Esophagus muscularis mucosa (tissue), 4 donors: ENCODE measurements at regions of chr2 and their contacts with region 1.

Region 1: GRCh38 chr2:120735746-120736170 is at the start of gene GLI2:
- DNase-seq: peak; percentile 93
- H3K4me3 ChIP-seq: peak within 1 kb of the TSS; percentile 70 to 81 (median 74)
- H3K27ac ChIP-seq: peak within 1 kb of the TSS; percentile 87 to 94 (median 92)
- H3K4me1 ChIP-seq: peaks cover 12 to 82% (median 74%) of the 10 kb centered on the region in 4 donors
- H3K27me3 ChIP-seq: peaks cover 0 to 32% (median 0%) of the 10 kb centered on the region in 4 donors
- CTCF ChIP-seq: peak; percentile 63 to 81 (median 76)
- EP300 ChIP-seq: no peak
- POLR2A ChIP-seq: no peak
- total RNA-seq, gene GLI2: 7.1 to 25.3 (median 11.8) TPM

Region 2: GRCh38 chr2:120820263-120820952 is 84.7 kb after region 1 on chr2:
- intact Hi-C with region 1: loop called (anchors 5 kb)
- DNase-seq: no peak
- H3K4me3 ChIP-seq: peak overlapping the region in 3 of 4 donors; percentile 3 to 41 (median 5)
- H3K27ac ChIP-seq: peak overlapping the region in 2 of 4 donors; percentile 27 to 50
- H3K4me1 ChIP-seq: peaks cover 6 to 52% (median 41%) of the 10 kb centered on the region in 4 donors
- H3K27me3 ChIP-seq: no peaks in the 10 kb centered on the region
- CTCF ChIP-seq: no peak
- EP300 ChIP-seq: no peak
- POLR2A ChIP-seq: no peak

Region 3: DNA sequence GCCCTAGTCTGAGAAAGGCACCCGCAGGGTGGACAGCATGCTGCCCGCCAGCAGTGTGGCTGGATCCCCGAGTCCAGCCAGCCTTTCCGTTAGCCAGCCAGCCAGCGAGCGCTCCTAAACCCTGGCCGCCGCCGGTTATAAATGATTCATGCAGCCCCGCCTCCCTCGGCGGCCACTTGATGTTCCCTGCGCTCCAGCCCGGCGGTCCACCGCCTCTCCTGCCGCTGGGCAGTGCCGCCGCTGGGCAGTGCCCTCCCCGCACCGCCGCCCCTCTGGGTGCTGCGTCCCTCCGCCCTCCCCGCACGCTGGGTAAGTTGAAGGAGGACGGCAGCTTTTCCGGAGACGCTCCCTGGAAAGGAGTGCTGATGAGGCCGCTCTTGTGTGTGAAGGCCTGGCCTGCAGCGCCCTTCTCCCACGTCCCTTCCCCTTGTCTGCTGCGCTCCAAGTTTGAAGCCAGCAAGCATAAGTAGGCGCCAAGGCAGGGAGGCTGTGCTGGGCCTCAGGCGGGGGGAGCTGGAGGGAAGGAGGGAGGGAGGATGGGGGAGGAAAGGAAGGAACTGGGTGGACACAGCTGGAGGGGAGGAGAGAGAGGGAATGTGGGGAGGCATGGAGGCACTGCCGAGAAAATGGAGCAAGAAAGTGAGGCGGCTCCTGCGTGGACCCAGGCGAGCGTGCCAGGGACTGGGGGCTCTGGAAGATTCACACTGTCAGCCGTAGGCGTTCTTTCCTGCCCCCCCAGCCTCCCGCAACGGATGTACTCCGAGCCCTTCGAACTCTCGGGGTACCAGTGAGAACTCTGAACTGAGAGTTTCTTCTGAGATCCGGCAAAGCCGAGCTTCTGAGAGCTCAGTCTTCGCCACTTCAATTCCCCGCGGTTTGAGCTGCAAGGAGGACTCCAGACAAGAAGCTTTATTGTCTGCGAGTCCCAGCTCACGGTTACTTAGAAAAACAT is 131.8 kb after region 1 on chr2:
- intact Hi-C with region 1: loop called (anchors 5 kb)
- DNase-seq: no peak
- H3K4me3 ChIP-seq: peak overlapping the region; percentile 52 to 65 (median 56)
- H3K27ac ChIP-seq: peak overlapping the region; percentile 83 to 93 (median 89)
- H3K4me1 ChIP-seq: peaks cover 12 to 71% (median 64%) of the 10 kb centered on the region in 4 donors
- H3K27me3 ChIP-seq: no peaks in the 10 kb centered on the region
- CTCF ChIP-seq: no peak
- EP300 ChIP-seq: no peak
- POLR2A ChIP-seq: no peak

Region 4: DNA sequence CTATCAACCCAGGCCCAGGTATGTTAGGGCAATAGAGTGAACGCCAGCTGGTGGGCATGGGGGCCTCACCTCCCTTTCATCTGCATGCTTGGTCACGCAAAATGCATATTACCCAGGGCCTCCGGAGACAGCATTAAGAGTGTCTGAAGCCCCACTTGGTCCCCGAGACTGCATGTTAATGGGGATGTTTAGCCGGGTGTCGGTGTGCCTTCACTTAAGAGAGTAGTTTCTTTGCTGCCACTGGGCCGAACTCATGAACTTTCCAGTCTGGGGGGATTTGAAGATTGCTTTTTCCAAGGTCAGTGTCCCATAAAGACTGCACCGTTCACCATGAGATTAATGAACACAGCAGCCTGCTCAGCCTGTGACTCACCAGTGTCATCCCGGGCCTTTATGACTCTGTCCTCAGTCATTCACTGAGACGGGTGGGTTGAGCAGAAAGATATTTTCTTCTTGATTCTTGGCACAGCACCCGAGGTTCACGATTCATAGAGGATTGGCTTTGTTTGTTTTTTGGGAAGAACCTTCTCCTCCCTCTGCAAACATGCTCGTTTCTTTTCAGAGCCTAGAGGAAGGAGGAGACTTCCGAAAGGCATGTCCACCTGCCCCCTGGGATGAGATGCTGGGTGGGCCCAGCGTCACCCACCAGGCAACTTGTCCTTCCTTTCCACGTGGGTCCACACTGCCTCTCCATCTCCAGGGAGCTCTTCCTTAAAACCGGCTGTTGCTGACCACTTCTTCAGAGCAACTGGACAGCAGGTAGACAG is 199.0 kb after region 1 on chr2:
- intact Hi-C with region 1: loop called (anchors 5 kb)
- DNase-seq: no peak
- H3K4me3 ChIP-seq: no peak overlapping the region
- H3K27ac ChIP-seq: peak overlapping the region; percentile 78 to 89 (median 82)
- H3K4me1 ChIP-seq: peaks cover 25 to 77% (median 68%) of the 10 kb centered on the region in 4 donors
- H3K27me3 ChIP-seq: no peaks in the 10 kb centered on the region
- CTCF ChIP-seq: no peak
- EP300 ChIP-seq: no peak
- POLR2A ChIP-seq: no peak

Region 5: GRCh38 chr2:121071034-121071504 is 335.3 kb after region 1 on chr2:
- intact Hi-C with region 1: loop called (anchors 5 kb)
- DNase-seq: no peak
- H3K4me3 ChIP-seq: no peak overlapping the region
- H3K27ac ChIP-seq: no peak overlapping the region
- H3K4me1 ChIP-seq: peaks cover 7 to 27% (median 27%) of the 10 kb centered on the region in 4 donors
- H3K27me3 ChIP-seq: peaks cover 0 to 23% (median 0%) of the 10 kb centered on the region in 4 donors
- CTCF ChIP-seq: peak; percentile 86 to 96 (median 94)
- EP300 ChIP-seq: no peak
- POLR2A ChIP-seq: no peak